Calu3 (cell line): ENCODE measurements at regions of chr20 and their contacts with region 1.

Region 1: GRCh38 chr20:48026991-48027503 is 241.8 kb upstream of the SULF2 start:
- DNase-seq: no peak
- H3K4me3 Mint-ChIP-seq: no peak overlapping the region
- H3K27ac Mint-ChIP-seq: no peak overlapping the region
- H3K4me1 Mint-ChIP-seq: no peaks in the 10 kb centered on the region
- H3K27me3 Mint-ChIP-seq: peaks cover 20% of the 10 kb centered on the region
- CTCF ChIP-seq: no peak

Region 2: GRCh38 chr20:47677635-47678453 is 349.2 kb before region 1 on chr20:
- CTCF ChIA-PET with region 1: no interaction called
- intact Hi-C with region 1: no loop called
- DNase-seq: peak; percentile 87
- H3K4me3 Mint-ChIP-seq: no peak overlapping the region
- H3K27ac Mint-ChIP-seq: no peak overlapping the region
- H3K4me1 Mint-ChIP-seq: no peaks in the 10 kb centered on the region
- H3K27me3 Mint-ChIP-seq: no peaks in the 10 kb centered on the region
- CTCF ChIP-seq: peak; percentile 98

Region 3: GRCh38 chr20:47949231-47949845 is 77.7 kb before region 1 on chr20:
- CTCF ChIA-PET with region 1: interaction called, 11 read pairs
- intact Hi-C with region 1: no loop called
- DNase-seq: no peak
- H3K4me3 Mint-ChIP-seq: no peak overlapping the region
- H3K27ac Mint-ChIP-seq: no peak overlapping the region
- H3K4me1 Mint-ChIP-seq: peaks cover 25% of the 10 kb centered on the region
- H3K27me3 Mint-ChIP-seq: peaks cover 4% of the 10 kb centered on the region
- CTCF ChIP-seq: no peak